ENCODE measurements at regions of chr18 and their contacts with region 1.

Region 1: GRCh38 chr18:75478996-75479880 is 51.7 kb upstream of the SMIM21 start:
- DNase-seq: no peak
- H3K4me3 Mint-ChIP-seq: no peak overlapping the region
- H3K27ac Mint-ChIP-seq: no peak overlapping the region
- H3K4me1 Mint-ChIP-seq: peaks cover 5% of the 10 kb centered on the region
- H3K27me3 Mint-ChIP-seq: peaks cover 16% of the 10 kb centered on the region

Region 2: GRCh38 chr18:74623047-74623816 is 856.0 kb before region 1 on chr18:
- CTCF ChIA-PET with region 1: no interaction called
- intact Hi-C with region 1: loop called (anchors 1 kb)
- DNase-seq: peak; percentile 64
- H3K4me3 Mint-ChIP-seq: no peak overlapping the region
- H3K27ac Mint-ChIP-seq: no peak overlapping the region
- H3K4me1 Mint-ChIP-seq: peaks cover 6% of the 10 kb centered on the region
- H3K27me3 Mint-ChIP-seq: no peaks in the 10 kb centered on the region

Region 3: GRCh38 chr18:75173125-75173432 is 306.2 kb before region 1 on chr18:
- CTCF ChIA-PET with region 1: interaction called, 3 read pairs
- intact Hi-C with region 1: loop called (anchors 5 kb)
- DNase-seq: no peak
- H3K4me3 Mint-ChIP-seq: no peak overlapping the region
- H3K27ac Mint-ChIP-seq: no peak overlapping the region
- H3K4me1 Mint-ChIP-seq: peaks cover 3% of the 10 kb centered on the region
- H3K27me3 Mint-ChIP-seq: no peaks in the 10 kb centered on the region

Region 4: GRCh38 chr18:75247611-75248421 is 231.4 kb before region 1 on chr18:
- CTCF ChIA-PET with region 1: interaction called, 5 read pairs
- intact Hi-C with region 1: loop called (anchors 5 kb)
- DNase-seq: peak; percentile 36
- H3K4me3 Mint-ChIP-seq: peak overlapping the region; percentile 77
- H3K27ac Mint-ChIP-seq: peak overlapping the region; percentile 93
- H3K4me1 Mint-ChIP-seq: peaks cover 60% of the 10 kb centered on the region
- H3K27me3 Mint-ChIP-seq: no peaks in the 10 kb centered on the region

Region 5: GRCh38 chr18:75727456-75727855 is 248.2 kb after region 1 on chr18:
- CTCF ChIA-PET with region 1: no interaction called
- intact Hi-C with region 1: no loop called
- DNase-seq: peak; percentile 66
- H3K4me3 Mint-ChIP-seq: no peak overlapping the region
- H3K27ac Mint-ChIP-seq: no peak overlapping the region
- H3K4me1 Mint-ChIP-seq: no peaks in the 10 kb centered on the region
- H3K27me3 Mint-ChIP-seq: peaks cover 34% of the 10 kb centered on the region

Region 6: DNA sequence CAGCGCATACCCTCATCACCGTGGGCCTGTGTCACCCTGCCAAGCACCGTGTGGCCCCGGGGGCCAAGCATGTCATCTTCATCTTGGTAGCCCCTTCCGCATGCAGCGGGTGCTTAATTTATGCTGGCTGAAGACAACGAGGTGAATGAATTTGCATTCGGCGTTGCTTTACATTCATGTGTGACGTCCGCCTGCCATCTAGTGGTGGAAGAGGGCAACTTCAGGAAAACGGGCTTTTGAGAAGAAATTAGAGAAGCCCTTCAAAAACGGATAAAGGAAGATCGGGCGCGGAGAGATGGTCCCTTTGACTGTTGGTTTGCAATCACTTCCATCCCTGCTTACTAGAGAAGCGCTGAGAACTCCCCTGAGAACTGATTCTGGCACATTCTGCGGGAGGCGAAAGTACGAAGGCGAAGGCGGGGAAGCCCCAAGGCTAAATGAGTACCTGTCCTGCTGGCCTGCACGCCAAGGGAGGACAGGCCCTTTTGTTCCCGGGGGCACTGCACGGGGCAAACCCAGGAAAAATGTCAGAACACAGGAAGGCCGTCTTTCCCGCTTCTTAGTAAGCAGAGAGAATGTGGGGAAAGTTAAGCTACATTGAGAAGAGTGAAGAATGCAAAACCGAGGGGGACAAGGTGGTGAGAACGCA is 870.0 kb after region 1 on chr18:
- CTCF ChIA-PET with region 1: no interaction called
- intact Hi-C with region 1: loop called (anchors 10 kb)
- DNase-seq: peak; percentile 80
- H3K4me3 Mint-ChIP-seq: no peak overlapping the region
- H3K27ac Mint-ChIP-seq: no peak overlapping the region
- H3K4me1 Mint-ChIP-seq: peaks cover 9% of the 10 kb centered on the region
- H3K27me3 Mint-ChIP-seq: peaks cover 7% of the 10 kb centered on the region

Measured in activated naive CD4-positive, alpha-beta T cell treated with anti-CD3 and anti-CD28 coated beads for 36 hours (primary cell).